Cardiac septum (tissue), 1 donor: ENCODE measurements at regions of chr3 and their contacts with region 1.

Region 1: DNA sequence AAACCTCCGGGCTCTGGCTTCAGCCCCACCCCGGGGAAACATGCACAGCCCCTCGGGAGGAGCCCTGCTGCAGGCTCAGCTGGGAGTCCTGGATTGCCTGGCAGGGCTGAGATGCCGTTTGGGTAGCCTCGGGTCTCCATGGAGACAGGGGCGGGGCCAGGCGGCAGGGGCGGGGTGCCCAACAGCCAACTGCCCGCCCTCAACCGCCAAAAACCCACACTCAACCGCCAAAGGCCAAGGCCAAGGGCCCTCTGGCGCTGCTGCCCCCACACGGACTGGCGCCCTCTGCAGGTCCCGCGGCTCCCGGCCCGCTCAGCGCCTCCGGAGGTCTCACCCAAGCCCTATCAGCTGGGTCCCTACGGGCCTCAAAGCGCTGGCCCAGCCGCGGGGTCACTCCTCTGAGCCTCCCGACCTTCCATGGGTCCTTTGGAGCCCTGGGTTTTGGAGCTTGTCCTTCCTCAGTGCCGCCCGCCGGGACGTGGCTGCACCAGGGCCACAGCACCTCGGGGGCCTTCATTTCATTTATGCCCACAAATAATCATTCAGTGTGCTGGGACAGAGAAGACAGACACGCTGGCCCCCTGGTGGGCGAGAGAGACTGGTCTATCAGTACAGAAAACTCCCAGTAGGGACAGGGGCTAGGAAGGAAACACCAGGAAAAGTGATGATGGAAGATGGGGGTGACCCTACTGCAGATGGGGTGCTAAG is 33.5 kb upstream of the ACAD9 start:
- DNase-seq: peak; percentile 94

Region 2: DNA sequence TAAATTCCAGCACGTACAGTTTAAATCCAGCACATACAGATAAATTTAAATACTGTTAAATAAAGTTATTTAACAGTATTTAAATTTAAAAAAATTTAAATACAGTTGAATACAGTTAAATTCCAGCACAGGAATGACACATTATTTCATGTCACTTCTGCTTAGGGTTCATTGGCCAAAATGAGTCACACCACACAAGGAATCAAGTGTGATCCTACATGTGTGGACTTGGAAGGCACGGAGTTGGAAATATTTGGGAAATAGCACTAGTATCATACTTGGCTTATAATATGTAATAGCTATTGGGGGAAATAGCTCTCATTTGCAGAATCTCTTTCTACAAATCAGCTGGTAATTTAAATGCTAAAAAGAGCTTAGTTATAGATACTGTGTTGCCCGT is 109.3 kb before region 1 on chr3:
- intact Hi-C with region 1: no loop called
- DNase-seq: no peak

Region 3: DNA sequence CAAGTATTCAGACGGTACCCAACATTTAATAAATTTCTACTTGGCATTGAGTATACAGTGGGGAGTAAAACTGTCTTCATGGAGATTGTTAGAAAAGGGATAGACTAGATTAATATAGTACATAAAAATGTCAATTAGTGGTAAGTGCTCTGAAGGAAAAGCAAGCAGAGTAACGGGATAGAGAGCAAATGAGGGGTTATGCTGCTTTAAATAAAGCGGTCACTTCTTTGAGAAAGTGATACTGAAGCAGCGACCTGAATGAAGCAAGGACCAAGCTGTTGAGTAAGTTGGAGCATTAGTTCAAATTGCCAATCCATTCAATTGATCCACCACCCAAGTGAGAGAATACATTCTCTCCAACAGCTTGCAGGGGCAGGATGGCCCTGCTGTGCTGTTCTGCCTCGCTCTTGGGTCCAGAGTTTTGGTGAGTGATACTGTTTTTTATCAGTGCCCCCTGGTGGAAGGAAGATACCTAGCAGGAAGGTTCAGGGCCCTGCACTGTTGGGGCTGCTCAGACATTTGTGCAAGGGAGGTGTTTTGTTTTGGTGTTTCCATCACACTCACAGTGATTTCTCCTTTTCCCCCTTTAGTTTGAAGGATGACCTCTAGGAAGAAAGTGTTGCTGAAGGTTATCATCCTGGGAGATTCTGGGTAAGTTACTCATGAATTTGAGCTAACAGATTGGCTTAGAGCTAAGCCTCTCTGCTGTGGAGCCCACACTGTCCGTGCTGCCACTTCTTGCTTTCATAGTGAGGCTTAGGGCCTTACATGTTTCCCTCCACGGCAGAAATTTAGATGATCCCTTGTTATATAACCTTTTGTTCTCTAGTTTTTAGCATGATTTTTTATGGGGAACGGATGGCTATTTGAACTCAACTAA is 50.9 kb before region 1 on chr3:
- intact Hi-C with region 1: loop called (anchors 5 kb)
- DNase-seq: no peak